MCF 10A (cell line): ENCODE measurements at regions of chr19 and their contacts with region 1.

Region 1: DNA sequence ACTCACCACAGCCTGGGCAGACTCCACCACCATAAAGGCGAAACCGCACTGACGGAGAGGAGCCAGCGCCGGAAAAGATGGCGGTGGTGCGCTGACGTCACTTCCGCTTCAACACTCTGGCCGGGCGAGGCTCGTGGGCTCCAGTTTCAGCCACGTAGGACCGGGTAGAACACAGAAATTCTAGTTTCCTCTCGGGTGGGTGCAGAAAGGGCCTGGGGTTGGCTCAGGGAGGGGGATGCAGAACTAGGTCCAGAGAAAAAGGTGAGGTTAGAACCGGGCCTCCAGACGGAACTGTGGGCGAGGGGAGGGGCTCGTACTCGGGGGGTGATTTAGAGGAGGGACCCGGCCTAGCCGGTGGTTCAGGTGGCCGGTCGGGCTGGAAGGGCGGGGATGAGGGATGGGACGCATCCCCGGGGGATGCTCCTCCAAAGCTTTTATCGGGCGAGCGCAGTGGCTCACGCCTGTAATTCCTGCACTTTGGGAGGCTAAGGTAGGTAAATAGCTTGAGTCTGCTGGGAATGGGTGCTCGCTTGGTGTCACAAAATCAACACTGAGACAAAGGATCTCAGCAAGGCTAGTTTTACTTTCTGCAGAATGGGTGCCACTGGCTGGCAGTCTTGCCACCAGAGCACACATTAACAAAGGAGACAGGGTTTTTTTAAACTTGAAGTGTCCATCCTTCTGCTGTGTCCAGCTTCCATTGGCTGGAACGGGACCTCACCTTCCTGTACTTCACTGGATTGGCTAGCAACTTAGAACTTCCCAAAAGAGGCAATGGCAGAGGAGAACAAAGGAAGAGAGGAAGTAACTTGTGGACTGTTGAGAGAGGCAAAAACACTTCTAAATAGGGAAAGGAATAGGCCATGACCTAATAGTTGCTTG is at the start of gene ZNF561:
- DNase-seq: peak; percentile 75
- H3K4me3 Mint-ChIP-seq: peak within 1 kb of the TSS; percentile 91
- H3K27ac Mint-ChIP-seq: peak within 1 kb of the TSS; percentile 99
- H3K4me1 Mint-ChIP-seq: peaks cover 20% of the 10 kb centered on the region
- H3K27me3 Mint-ChIP-seq: no peaks in the 10 kb centered on the region
- CTCF ChIP-seq: no peak
- total RNA-seq, gene ZNF561: 37.0 and 37.7 TPM in 2 replicates

Region 2: DNA sequence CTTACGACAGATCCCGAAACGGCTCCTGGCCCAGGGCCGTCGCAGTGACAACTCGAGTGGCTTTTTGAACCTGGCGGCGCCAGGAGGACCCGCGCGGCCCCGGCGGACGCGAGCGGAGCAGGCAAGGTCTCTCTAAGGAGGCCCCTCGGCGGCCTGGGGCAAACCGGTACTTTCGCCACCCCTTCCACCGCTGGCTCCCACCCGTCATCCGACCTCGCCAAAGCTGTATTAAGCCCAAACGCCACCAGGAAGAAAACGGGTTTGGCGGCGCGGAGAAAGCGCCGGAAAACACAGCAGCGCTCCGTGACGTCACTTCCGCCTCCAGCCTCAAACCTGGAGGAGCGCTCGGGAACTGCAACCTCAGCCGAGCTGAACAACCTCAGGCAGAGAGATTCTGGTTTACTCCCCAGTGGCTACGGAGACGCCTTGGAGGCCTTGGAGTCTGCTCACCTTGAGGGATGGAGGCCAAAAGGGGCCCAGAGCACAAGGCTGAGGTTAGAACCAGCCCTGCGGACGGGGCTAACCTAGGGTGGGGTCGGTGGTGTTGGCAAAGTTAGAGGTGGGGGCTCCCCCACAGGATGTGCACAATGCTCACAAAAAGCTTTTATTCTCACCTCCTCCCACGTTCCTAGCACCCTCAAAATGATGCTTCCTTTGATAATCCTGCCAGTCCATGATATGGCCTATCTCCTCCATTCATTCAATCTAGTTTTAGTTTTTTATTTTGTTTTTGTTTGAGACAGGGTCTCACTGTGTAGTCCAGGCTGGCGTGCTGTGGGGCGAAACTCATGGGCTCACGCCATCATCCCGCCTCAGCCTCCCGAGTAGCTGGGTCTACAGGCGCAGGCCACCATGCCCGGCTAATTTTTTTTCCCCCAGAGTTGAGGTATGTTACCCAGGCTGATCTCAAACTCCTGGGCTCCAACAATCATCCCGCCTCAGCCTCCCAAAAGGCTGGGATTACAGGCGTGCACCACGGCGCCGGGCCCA is 185.8 kb before region 1 on chr19 and contains the start of gene ZNF266:
- CTCF ChIA-PET with region 1: interaction called, 3 read pairs
- POLR2A ChIA-PET with region 1: interaction called, 10 read pairs
- intact Hi-C with region 1: no loop called
- DNase-seq: peak; percentile 89
- H3K4me3 Mint-ChIP-seq: peak within 1 kb of the TSS; percentile 88
- H3K27ac Mint-ChIP-seq: peak within 1 kb of the TSS; percentile 98
- H3K4me1 Mint-ChIP-seq: peaks cover 9% of the 10 kb centered on the region
- H3K27me3 Mint-ChIP-seq: no peaks in the 10 kb centered on the region
- CTCF ChIP-seq: peak; percentile 72
- total RNA-seq, gene ZNF266: 17.0 and 23.7 TPM in 2 replicates

Region 3: DNA sequence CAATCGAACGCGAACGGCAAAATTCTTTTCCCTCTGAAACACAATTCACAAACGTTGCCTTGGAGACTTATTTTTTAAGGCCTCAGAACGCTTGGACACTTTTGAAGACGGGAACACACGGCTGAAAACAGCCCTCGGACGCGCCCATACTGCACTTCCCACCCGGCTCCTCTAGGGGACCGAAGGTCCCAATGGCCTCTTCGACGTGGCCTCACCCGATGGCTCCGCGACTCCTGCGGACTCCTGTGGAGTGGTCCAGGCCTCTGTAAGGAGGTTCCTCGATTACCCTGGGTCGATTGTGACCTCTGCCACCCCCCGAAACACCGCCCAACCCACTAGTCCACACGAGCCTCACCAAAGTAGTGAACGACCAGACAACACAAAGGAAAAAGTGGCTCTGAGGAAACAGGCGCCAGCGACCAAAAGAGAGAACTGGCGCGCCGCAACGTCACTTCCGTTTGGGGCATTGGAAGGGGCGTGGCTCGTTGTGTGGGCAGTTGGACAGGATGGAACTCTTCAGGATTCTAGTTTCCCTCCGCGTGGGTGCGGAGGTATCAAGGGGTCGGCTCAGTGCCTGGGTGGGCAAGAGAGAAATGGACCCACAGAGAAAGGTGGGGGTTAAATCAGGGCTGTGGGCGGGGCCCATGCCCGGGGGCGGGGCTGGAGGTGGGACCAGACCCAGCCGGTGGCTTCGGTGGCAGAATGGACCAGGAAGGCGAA is 123.1 kb before region 1 on chr19 and contains the start of gene ZNF560:
- CTCF ChIA-PET with region 1: no interaction called
- POLR2A ChIA-PET with region 1: no interaction called
- intact Hi-C with region 1: no loop called
- DNase-seq: no peak
- H3K4me3 Mint-ChIP-seq: no peak within 1 kb of the TSS
- H3K27ac Mint-ChIP-seq: no peak within 1 kb of the TSS
- H3K4me1 Mint-ChIP-seq: no peaks in the 10 kb centered on the region
- H3K27me3 Mint-ChIP-seq: no peaks in the 10 kb centered on the region
- CTCF ChIP-seq: peak; percentile 17
- total RNA-seq, gene ZNF560: not detected in 2 replicates

Region 4: DNA sequence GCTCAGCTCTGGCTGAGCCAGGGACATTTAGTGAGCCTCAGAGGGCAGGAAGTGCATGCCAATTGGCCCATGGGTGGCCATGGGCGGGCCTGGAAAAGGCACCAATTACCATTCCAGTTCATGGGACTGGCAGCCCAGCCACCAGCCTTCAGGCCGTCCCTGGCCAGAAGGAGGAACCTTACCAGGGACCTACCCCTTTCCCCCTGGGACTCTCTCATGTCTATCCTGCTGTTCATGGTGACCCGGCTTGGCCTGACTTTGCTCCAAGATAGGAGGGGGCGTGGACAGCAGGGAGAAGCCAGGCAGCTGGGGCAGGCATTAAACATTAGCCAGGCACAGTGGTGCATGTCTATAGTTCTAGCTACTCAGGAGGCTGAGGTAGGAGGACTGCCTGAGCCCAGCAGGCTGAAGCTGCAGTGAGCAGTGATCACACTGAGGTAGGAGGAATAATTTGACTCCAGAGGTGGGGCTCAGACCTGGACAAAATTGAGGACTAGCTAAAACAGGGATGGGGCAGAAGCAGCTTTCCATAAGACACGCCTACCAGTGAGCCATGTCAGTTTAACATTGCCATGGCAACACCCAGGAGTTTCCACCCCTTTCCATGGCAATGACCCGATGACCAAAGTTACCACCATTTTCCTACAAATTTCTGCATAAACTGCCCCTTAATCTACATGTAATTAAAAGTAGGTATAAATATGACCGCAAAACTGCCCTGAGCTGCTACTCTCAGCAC is 68.7 kb before region 1 on chr19:
- CTCF ChIA-PET with region 1: no interaction called
- POLR2A ChIA-PET with region 1: no interaction called
- intact Hi-C with region 1: no loop called
- DNase-seq: no peak
- H3K4me3 Mint-ChIP-seq: no peak overlapping the region
- H3K27ac Mint-ChIP-seq: no peak overlapping the region
- H3K4me1 Mint-ChIP-seq: no peaks in the 10 kb centered on the region
- H3K27me3 Mint-ChIP-seq: no peaks in the 10 kb centered on the region
- CTCF ChIP-seq: no peak

Region 5: GRCh38 chr19:9597027-9597426 is 24.4 kb before region 1 on chr19:
- CTCF ChIA-PET with region 1: interaction called, 4 read pairs
- POLR2A ChIA-PET with region 1: interaction called, 16 read pairs
- intact Hi-C with region 1: no loop called
- DNase-seq: peak; percentile 93
- H3K4me3 Mint-ChIP-seq: peak overlapping the region; percentile 26
- H3K27ac Mint-ChIP-seq: peak overlapping the region; percentile 25
- H3K4me1 Mint-ChIP-seq: peaks cover 14% of the 10 kb centered on the region
- H3K27me3 Mint-ChIP-seq: no peaks in the 10 kb centered on the region
- CTCF ChIP-seq: no peak

Region 6: GRCh38 chr19:9674663-9675357 is 53.4 kb after region 1 on chr19 and contains the start of gene ZNF562:
- CTCF ChIA-PET with region 1: interaction called, 4 read pairs
- POLR2A ChIA-PET with region 1: interaction called, 19 read pairs
- intact Hi-C with region 1: no loop called
- DNase-seq: peak; percentile 89
- H3K4me3 Mint-ChIP-seq: peak within 1 kb of the TSS; percentile 95
- H3K27ac Mint-ChIP-seq: peak within 1 kb of the TSS; percentile 99
- H3K4me1 Mint-ChIP-seq: peaks cover 11% of the 10 kb centered on the region
- H3K27me3 Mint-ChIP-seq: no peaks in the 10 kb centered on the region
- CTCF ChIP-seq: no peak
- total RNA-seq, gene ZNF562: 56.4 and 56.5 TPM in 2 replicates

Region 7: GRCh38 chr19:9785367-9786331 is 164.3 kb after region 1 on chr19:
- CTCF ChIA-PET with region 1: interaction called, 23 read pairs
- POLR2A ChIA-PET with region 1: interaction called, 5 read pairs
- intact Hi-C with region 1: loop called (anchors 1 kb)
- DNase-seq: peak; percentile 85
- H3K4me3 Mint-ChIP-seq: peak overlapping the region; percentile 93
- H3K27ac Mint-ChIP-seq: peak overlapping the region; percentile 71
- H3K4me1 Mint-ChIP-seq: peaks cover 16% of the 10 kb centered on the region
- H3K27me3 Mint-ChIP-seq: no peaks in the 10 kb centered on the region
- CTCF ChIP-seq: no peak

Region 8: GRCh38 chr19:9827289-9828238 is 206.2 kb after region 1 on chr19 and contains the start of gene UBL5:
- CTCF ChIA-PET with region 1: interaction called, 3 read pairs
- POLR2A ChIA-PET with region 1: interaction called, 26 read pairs
- intact Hi-C with region 1: no loop called
- DNase-seq: peak; percentile 93
- H3K4me3 Mint-ChIP-seq: peak within 1 kb of the TSS; percentile 90
- H3K27ac Mint-ChIP-seq: peak within 1 kb of the TSS; percentile 97
- H3K4me1 Mint-ChIP-seq: peaks cover 6% of the 10 kb centered on the region
- H3K27me3 Mint-ChIP-seq: no peaks in the 10 kb centered on the region
- CTCF ChIP-seq: no peak
- total RNA-seq, gene UBL5: 302 and 374 TPM in 2 replicates